Activated naive CD4-positive, alpha-beta T cell treated with anti-CD3 and anti-CD28 coated beads for 36 hours (primary cell): ENCODE measurements at regions of chrX and their contacts with region 1.

Region 1: DNA sequence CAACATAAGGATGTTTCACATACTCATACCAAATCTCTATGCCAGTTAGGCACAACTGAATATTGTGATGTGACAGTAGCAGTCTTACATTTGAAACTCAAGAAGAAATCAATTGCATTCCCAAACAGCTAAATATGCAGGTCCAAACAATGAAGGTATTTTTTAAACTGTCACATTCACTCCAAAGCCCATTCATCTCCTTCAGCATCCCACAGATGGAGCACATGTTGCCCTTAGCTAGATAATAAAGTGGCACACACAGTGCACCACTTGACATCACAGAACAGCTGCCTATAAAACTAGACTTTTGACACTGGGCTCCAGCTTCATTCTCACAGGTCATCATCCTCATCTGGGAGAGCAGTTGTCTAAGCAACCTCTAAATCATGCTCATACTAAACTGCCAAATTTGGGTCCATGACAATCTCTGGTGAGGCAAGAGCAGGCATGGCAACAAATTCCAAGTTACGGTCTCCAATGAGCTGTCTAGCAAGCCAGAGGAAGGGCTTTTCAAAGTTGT is 26.2 kb upstream of the ARHGEF6 start:
- DNase-seq: no peak
- H3K4me3 Mint-ChIP-seq: no peak overlapping the region
- H3K27ac Mint-ChIP-seq: no peak overlapping the region
- H3K4me1 Mint-ChIP-seq: peaks cover 13% of the 10 kb centered on the region
- H3K27me3 Mint-ChIP-seq: no peaks in the 10 kb centered on the region

Region 2: GRCh38 chrX:136781180-136781797 is 25.7 kb before region 1 on chrX:
- CTCF ChIA-PET with region 1: no interaction called
- intact Hi-C with region 1: no loop called
- DNase-seq: no peak
- H3K4me3 Mint-ChIP-seq: peak overlapping the region; percentile 90
- H3K27ac Mint-ChIP-seq: peak overlapping the region; percentile 99
- H3K4me1 Mint-ChIP-seq: peaks cover 44% of the 10 kb centered on the region
- H3K27me3 Mint-ChIP-seq: no peaks in the 10 kb centered on the region

Region 3: GRCh38 chrX:136847876-136848337 is 41.0 kb after region 1 on chrX:
- CTCF ChIA-PET with region 1: interaction called, 4 read pairs
- intact Hi-C with region 1: loop called (anchors 5 kb)
- DNase-seq: no peak
- H3K4me3 Mint-ChIP-seq: no peak overlapping the region
- H3K27ac Mint-ChIP-seq: no peak overlapping the region
- H3K4me1 Mint-ChIP-seq: no peaks in the 10 kb centered on the region
- H3K27me3 Mint-ChIP-seq: no peaks in the 10 kb centered on the region